ENCODE measurements at regions of chr2 and their contacts with region 1.

Region 1: GRCh38 chr2:210476194-210477128 is at the start of gene LANCL1:
- DNase-seq: peak; percentile 61 to 90 (median 73)
- ATAC-seq: peak; percentile 98
- H3K4me3 ChIP-seq: peak within 1 kb of the TSS; percentile 96
- H3K4me3 Mint-ChIP-seq: peak within 1 kb of the TSS; percentile 100
- H3K27ac ChIP-seq: peak within 1 kb of the TSS; percentile 79 to 94
- H3K27ac Mint-ChIP-seq: peak within 1 kb of the TSS; percentile 97
- H3K4me1 ChIP-seq: peaks cover 18% of the 10 kb centered on the region
- H3K4me1 Mint-ChIP-seq: peaks cover 70% of the 10 kb centered on the region
- H3K27me3 ChIP-seq: no peaks in the 10 kb centered on the region
- H3K27me3 Mint-ChIP-seq: no peaks in the 10 kb centered on the region
- CTCF ChIP-seq: no peak
- total RNA-seq, gene LANCL1: 22.4 to 23.3 TPM

Region 2: DNA sequence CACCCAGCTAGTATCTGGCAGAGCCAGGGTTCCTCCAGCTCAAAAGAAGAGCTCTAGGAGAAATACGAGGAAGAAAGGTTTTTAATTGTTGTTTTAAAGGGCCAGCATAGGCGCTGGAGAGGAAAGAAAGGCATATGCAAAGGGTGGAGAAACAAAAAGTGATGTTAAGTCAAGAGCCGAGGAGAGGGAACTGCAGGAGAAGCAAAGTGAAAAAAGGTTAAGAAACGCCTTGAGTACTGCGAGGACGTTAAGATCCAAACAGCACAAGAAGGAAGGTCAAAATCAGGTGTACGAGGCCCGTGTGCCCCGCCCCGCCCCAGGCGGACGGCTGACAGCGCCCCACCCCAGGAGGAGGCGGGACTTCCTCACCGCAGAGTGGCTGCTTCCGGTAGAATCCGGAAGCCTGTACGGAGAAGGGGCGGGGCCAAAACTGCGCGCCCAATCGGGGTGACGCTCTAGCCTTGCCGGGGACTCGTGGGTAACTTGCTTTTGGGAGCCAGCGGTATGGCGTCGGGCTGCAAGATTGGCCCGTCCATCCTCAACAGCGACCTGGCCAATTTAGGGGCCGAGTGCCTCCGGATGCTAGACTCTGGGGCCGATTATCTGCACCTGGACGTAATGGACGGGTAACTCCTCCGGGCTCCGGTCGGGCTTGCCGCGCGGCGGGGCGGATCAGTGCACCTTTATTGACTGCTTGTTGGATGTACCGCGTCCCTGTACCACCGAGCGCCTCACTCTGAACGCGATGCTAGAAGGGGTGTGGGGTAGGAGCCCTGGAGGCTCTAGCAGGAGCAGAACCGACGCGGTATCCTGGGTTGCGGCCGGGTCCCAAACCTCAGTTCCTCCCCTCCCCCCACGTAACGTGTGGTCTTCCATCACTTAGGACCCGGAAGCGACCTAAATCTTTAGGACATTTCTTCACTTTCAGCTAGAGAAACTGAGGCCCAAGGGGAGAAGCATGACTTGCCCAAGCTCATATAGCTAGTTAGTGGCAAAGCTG is 474.0 kb before region 1 on chr2 and contains the start of gene RPE:
- CTCF ChIA-PET with region 1: no interaction called
- POLR2A ChIA-PET with region 1: no interaction called
- intact Hi-C with region 1: loop called in 1 of 2 experiments (anchors 2 kb)
- DNase-seq: peak; percentile 94 to 100 (median 97)
- ATAC-seq: peak; percentile 98
- H3K4me3 ChIP-seq: peak within 1 kb of the TSS; percentile 88
- H3K4me3 Mint-ChIP-seq: peak within 1 kb of the TSS; percentile 90
- H3K27ac ChIP-seq: peak within 1 kb of the TSS; percentile 63 to 70
- H3K27ac Mint-ChIP-seq: peak within 1 kb of the TSS; percentile 88
- H3K4me1 ChIP-seq: peaks cover 23% of the 10 kb centered on the region
- H3K4me1 Mint-ChIP-seq: peaks cover 75% of the 10 kb centered on the region
- H3K27me3 ChIP-seq: no peaks in the 10 kb centered on the region
- H3K27me3 Mint-ChIP-seq: no peaks in the 10 kb centered on the region
- CTCF ChIP-seq: no peak
- total RNA-seq, gene RPE: 11.3 TPM

Region 3: GRCh38 chr2:210177769-210178168 is 298.7 kb before region 1 on chr2:
- CTCF ChIA-PET with region 1: no interaction called
- POLR2A ChIA-PET with region 1: no interaction called
- intact Hi-C with region 1: loop called (anchors 2 to 10 kb)
- DNase-seq: no peak
- ATAC-seq: no peak
- H3K4me3 ChIP-seq: no peak overlapping the region
- H3K4me3 Mint-ChIP-seq: no peak overlapping the region
- H3K27ac ChIP-seq: no peak overlapping the region
- H3K27ac Mint-ChIP-seq: no peak overlapping the region
- H3K4me1 ChIP-seq: peaks cover 13% of the 10 kb centered on the region
- H3K4me1 Mint-ChIP-seq: peaks cover 29% of the 10 kb centered on the region
- H3K27me3 ChIP-seq: peaks cover 0 to 4% of the 10 kb centered on the region in 2 experiments
- H3K27me3 Mint-ChIP-seq: no peaks in the 10 kb centered on the region
- CTCF ChIP-seq: no peak